ENCODE measurements at regions of chr22 and their contacts with region 1.

Region 1: DNA sequence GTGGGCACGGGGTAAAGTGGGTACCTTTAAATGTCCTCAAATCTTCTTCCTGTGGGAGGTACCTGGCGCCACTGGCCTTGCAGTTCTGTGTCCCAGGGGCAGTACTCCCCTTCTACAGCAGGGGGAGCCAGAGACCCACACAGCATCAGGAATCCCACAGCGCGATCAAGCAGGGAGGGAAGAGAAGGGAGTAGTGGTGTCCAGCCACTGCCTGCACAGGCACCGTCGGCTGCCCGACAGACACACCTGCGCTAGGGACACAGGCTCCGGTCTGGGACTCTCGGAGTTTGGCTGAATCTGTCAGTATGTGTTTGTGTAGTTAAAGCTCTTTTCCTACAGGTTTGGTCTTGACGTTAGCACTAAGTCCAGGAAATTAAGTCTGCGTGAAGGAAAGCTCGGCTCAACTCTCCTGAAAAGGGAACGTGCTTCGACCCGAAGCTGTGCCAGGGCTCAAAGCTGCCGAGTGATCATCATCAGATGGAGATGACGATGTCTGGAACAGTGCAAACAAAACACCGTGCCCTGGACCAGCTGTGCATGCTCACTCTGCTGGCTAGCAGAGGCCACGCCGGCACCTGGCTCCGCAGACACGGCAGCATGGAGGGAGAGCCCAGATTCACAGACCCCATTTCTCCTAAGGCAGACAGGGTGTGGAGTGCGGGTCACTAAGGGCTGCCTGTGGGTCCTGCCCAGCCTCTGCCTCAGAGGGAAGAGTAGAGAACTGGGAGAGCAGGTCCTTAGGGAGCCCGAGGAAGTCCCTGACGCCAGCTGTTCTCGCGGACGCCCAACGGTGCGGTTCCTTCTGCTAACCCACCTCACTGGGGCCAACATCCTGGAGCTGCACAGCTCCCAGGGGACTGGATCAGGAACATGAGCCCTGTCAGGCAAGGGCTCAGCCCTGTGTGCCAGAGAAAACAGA is 56.0 kb upstream of the BID start:
- DNase-seq: peak; percentile 79 to 90
- ATAC-seq: peak; percentile 86 to 100 (median 96)
- H3K4me3 ChIP-seq: no peak overlapping the region
- H3K4me3 Mint-ChIP-seq: no peak overlapping the region
- H3K27ac ChIP-seq: no peak overlapping the region
- H3K27ac Mint-ChIP-seq: peak overlapping the region in 1 of 2 donors; percentile 56
- H3K4me1 ChIP-seq: peaks cover 5% of the 10 kb centered on the region
- H3K4me1 Mint-ChIP-seq: peaks cover 7 to 9% of the 10 kb centered on the region in 2 donors
- H3K27me3 ChIP-seq: no peaks in the 10 kb centered on the region
- H3K27me3 Mint-ChIP-seq: no peaks in the 10 kb centered on the region
- CTCF ChIP-seq: peak; percentile 98

Region 2: DNA sequence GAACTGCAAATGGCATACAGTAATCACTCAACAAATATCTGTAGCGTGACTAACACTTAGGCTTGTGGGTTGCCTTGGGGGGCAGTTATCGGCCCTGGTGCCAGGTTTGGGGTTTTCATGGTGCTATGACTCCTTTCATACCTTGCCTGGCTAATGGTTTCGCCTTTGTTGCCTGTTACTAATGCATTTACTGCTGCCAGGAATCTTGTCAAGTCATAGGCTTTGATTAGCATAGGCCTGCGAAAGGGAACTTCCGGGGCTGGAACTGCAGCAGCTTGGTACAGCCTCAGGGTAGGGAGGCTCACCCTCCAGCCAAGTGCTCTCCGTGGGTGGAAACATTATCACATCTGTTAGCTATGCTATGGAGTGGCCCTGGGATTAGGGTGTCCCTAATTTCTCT is 253.8 kb before region 1 on chr22:
- intact Hi-C with region 1: no loop called
- DNase-seq: no peak
- ATAC-seq: no peak
- H3K4me3 ChIP-seq: no peak overlapping the region
- H3K4me3 Mint-ChIP-seq: no peak overlapping the region
- H3K27ac ChIP-seq: no peak overlapping the region
- H3K27ac Mint-ChIP-seq: no peak overlapping the region
- H3K4me1 ChIP-seq: no peaks in the 10 kb centered on the region
- H3K4me1 Mint-ChIP-seq: no peaks in the 10 kb centered on the region
- H3K27me3 ChIP-seq: no peaks in the 10 kb centered on the region
- H3K27me3 Mint-ChIP-seq: no peaks in the 10 kb centered on the region
- CTCF ChIP-seq: no peak

Region 3: DNA sequence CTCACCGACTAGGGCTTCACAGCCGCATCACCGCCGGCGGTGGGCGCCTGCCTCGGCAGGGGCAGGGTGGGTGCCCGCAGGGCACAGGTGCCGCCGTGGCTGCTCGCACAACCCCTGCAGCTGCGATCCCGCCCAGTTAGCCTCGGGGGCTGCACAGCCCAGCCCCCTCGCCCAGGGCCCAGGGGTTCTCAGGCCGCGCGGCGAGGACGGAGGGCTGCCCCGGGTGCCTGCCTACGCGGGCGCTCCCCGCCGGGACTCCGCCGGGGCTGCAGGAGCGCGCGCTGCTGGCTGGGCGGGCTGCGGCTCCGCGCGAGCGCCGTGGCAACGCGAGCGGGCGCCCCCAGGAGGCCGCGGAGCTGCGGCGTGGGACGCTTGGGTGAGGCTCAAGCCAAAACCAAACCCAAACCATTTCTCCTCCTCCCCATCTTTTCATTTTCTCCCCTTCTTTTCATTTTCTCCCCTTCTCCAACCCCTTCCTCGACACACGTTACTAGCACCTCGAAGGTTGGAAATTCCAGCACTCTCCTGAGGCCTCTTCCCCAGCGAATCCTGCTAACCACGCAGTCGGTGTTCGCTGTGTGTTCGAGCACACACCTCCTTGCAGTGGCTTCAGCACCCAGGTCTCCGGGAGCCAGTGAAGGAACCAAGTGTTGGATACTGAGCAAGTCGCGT is 194.1 kb after region 1 on chr22 and contains the start of gene MICAL3:
- intact Hi-C with region 1: loop called (anchors 2 kb)
- DNase-seq: peak; percentile 48 to 83
- ATAC-seq: peak; percentile 84 to 97 (median 95)
- H3K4me3 ChIP-seq: peak within 1 kb of the TSS; percentile 34
- H3K4me3 Mint-ChIP-seq: peak within 1 kb of the TSS; percentile 82
- H3K27ac ChIP-seq: no peak within 1 kb of the TSS
- H3K27ac Mint-ChIP-seq: no peak within 1 kb of the TSS
- H3K4me1 ChIP-seq: peaks cover 11% of the 10 kb centered on the region
- H3K4me1 Mint-ChIP-seq: peaks cover 15 to 16% of the 10 kb centered on the region in 2 donors
- H3K27me3 ChIP-seq: peaks cover 17% of the 10 kb centered on the region
- H3K27me3 Mint-ChIP-seq: peaks cover 46 to 54% of the 10 kb centered on the region in 2 donors
- CTCF ChIP-seq: peak; percentile 34
- total RNA-seq, gene MICAL3: 17.1 to 36.3 (median 34.3) TPM